Right ventricle myocardium inferior (tissue), 1 donor: ENCODE measurements at regions of chr12 and their contacts with region 1.

Region 1: GRCh38 chr12:57896434-57897201 is 44.7 kb upstream of the ATP23 start:
- DNase-seq: peak; percentile 87
- ATAC-seq: peak; percentile 45

Region 2: GRCh38 chr12:57836442-57837375 is 59.9 kb before region 1 on chr12:
- intact Hi-C with region 1: loop called (anchors 2 kb)
- DNase-seq: peak; percentile 78
- ATAC-seq: peak; percentile 58

Region 3: DNA sequence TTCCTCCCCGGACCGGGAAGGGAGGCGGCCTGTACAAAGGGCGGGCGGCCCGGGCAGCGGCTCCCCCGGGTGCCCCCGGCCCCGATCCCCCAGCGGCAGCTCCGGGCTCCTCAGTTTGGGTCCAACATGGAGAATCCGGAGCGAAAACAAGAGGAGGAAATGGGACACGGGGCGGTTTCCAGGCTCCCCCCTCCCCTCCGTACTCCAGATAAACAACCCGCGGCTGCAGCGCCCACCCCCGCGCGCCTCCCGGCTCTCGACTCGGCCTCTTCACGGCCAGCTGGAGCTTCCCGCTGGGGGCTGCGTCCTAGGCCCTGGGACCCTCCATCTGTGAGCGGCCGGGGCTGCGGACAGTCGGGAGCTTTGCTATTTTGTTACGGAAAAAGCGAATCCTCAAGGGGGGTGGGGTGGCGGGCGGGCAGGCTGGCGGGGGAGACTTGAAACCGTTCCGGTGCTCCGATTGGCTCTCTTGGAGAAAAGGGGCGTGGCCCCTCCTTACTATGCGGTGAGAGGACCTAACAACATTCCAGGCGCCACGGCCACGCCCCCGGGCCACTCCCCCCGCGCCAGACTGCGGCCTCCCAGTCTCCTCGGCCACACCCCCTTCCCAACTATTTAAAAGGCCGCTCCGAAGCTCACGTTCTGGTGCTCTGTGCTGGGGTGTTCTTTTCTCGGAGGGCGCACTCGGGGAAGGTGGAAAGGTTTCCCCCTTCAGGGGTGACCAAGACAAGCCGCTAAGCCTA is 49.9 kb before region 1 on chr12 and contains the start of gene CTDSP2:
- intact Hi-C with region 1: loop called (anchors 1 kb)
- DNase-seq: peak; percentile 100
- ATAC-seq: peak; percentile 92
- total RNA-seq, gene CTDSP2: 105 TPM

Region 4: GRCh38 chr12:57865090-57865751 is 31.4 kb before region 1 on chr12:
- intact Hi-C with region 1: loop called (anchors 2 kb)
- DNase-seq: peak; percentile 91
- ATAC-seq: peak; percentile 92

Region 5: DNA sequence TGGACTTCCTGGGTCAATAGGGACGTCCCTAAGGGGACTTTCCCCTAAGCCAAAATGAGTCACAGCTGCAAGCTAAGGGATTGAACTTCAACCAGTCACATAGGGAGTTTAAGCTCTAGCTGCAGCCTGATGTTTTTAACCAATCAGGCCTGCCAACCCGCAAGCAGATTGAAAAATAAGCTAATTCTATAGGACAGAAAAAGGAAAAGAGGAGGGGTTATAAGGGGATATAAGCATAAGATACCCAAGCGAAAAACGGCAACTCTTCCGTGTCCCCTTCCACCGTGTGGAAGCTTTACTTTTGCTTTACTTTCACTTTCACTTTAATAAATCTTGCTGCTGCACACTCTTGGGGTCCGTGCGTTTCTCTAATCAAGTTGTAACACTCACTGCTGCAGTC is 69.1 kb after region 1 on chr12:
- intact Hi-C with region 1: no loop called
- DNase-seq: no peak
- ATAC-seq: no peak